ENCODE measurements at regions of chr21 and their contacts with region 1.

Region 1: DNA sequence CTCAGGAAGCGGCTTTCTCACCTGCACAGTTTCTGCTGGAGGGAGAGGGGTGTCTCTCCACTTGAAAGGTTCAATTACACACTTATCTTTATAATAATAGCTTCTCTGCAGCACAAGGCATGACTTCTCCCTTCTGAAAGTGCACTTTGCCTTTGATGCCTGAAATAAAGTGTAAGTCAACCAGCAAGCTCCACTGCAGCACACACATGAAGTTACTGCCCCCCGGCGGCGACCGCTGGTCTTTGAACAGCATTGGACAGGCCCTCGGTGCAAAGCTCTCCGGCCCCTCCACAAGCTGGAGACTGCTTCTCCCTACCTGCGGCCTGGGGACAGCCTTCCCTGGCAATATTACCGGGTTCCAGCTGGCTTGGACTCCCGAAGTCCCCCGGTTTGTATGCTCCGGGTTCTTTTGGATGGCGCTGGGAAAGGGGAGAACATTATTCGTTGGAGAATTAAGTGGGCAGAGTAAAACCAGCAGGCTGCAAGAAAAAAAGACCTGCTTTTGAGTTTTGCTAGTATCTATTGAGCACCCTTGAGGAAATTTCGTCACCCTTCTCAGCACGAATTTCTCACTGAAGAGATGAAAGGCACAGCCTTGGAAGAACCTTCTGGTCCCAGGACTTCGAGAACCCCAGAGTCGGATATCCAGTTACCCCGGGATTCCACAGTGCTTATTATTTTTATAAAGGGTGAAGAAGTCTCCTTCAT is 11.8 kb downstream of the RCAN1 start:
- DNase-seq: peak; percentile 72
- ATAC-seq: peak; percentile 87
- H3K4me3 Mint-ChIP-seq: no peak overlapping the region
- H3K27ac Mint-ChIP-seq: no peak overlapping the region
- H3K4me1 Mint-ChIP-seq: no peaks in the 10 kb centered on the region
- H3K27me3 Mint-ChIP-seq: no peaks in the 10 kb centered on the region

Region 2: GRCh38 chr21:34362136-34362444 is 241.1 kb before region 1 on chr21:
- CTCF ChIA-PET with region 1: interaction called, 16 read pairs
- POLR2A ChIA-PET with region 1: no interaction called
- DNase-seq: no peak
- ATAC-seq: peak; percentile 26
- H3K4me3 Mint-ChIP-seq: no peak overlapping the region
- H3K27ac Mint-ChIP-seq: no peak overlapping the region
- H3K4me1 Mint-ChIP-seq: peaks cover 7% of the 10 kb centered on the region
- H3K27me3 Mint-ChIP-seq: peaks cover 11% of the 10 kb centered on the region

Region 3: GRCh38 chr21:34510148-34511142 is 92.7 kb before region 1 on chr21:
- CTCF ChIA-PET with region 1: interaction called, 25 read pairs
- POLR2A ChIA-PET with region 1: no interaction called
- DNase-seq: peak; percentile 51
- ATAC-seq: peak; percentile 64
- H3K4me3 Mint-ChIP-seq: no peak overlapping the region
- H3K27ac Mint-ChIP-seq: no peak overlapping the region
- H3K4me1 Mint-ChIP-seq: no peaks in the 10 kb centered on the region
- H3K27me3 Mint-ChIP-seq: no peaks in the 10 kb centered on the region

Region 4: GRCh38 chr21:34517491-34518245 is 85.5 kb before region 1 on chr21:
- CTCF ChIA-PET with region 1: interaction called, 25 read pairs
- POLR2A ChIA-PET with region 1: no interaction called
- DNase-seq: peak; percentile 46
- ATAC-seq: peak; percentile 83
- H3K4me3 Mint-ChIP-seq: no peak overlapping the region
- H3K27ac Mint-ChIP-seq: no peak overlapping the region
- H3K4me1 Mint-ChIP-seq: peaks cover 14% of the 10 kb centered on the region
- H3K27me3 Mint-ChIP-seq: no peaks in the 10 kb centered on the region

Region 5: DNA sequence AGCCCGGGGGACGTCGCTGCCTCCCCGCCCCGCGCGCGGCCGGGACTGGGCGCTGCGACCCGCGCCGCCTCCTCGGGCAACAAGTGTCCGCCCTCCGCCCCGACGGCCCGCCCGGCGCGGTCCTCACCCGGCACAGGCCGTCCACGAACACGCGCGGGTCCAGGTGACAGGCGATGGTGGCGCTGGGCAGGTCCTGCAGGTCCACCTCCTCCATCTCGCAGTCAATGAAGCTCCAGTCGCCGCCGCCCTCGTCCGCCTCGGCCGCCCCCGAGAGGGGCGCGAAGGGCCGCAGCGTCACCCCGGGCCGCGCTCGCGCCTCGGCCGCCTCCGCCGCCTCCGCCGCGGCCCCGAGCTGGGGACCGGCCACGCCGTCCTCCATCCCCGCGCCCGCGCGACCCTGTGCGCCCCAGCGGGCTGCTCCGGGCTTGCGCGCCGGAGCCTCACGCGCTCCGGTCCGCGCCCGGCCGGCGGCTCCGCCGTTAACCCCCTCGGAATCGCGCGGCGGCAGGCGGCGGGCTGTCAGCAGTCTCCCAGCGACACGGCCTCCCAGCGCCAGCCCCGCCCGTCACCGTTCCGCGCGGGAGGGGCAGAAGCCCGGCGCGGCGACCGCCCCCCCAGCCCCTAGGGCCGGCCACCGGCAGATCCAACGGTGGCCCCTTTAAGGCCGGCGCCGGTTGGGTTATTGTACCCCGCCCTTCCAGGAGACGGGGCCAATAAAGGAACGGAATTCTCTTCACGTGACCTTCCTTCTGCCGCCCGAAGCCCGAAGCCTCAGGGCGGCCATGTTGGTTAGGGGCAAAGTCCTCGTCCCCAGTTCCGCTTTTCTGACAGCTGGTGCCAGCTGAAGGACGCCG is 11.7 kb after region 1 on chr21 and contains the start of gene RCAN1:
- CTCF ChIA-PET with region 1: interaction called, 25 read pairs
- POLR2A ChIA-PET with region 1: no interaction called
- DNase-seq: peak; percentile 92
- ATAC-seq: peak; percentile 98
- H3K4me3 Mint-ChIP-seq: peak within 1 kb of the TSS; percentile 84
- H3K27ac Mint-ChIP-seq: peak within 1 kb of the TSS; percentile 87
- H3K4me1 Mint-ChIP-seq: peaks cover 22% of the 10 kb centered on the region
- H3K27me3 Mint-ChIP-seq: peaks cover 14% of the 10 kb centered on the region
- total RNA-seq, gene RCAN1: 7.8 to 8.1 TPM

Region 6: GRCh38 chr21:34630536-34631143 is 27.5 kb after region 1 on chr21:
- CTCF ChIA-PET with region 1: interaction called, 11 read pairs
- POLR2A ChIA-PET with region 1: no interaction called
- DNase-seq: peak; percentile 52
- ATAC-seq: peak; percentile 73
- H3K4me3 Mint-ChIP-seq: no peak overlapping the region
- H3K27ac Mint-ChIP-seq: no peak overlapping the region
- H3K4me1 Mint-ChIP-seq: no peaks in the 10 kb centered on the region
- H3K27me3 Mint-ChIP-seq: peaks cover 8% of the 10 kb centered on the region

Region 7: GRCh38 chr21:34771512-34772028 is 168.4 kb after region 1 on chr21:
- CTCF ChIA-PET with region 1: no interaction called
- POLR2A ChIA-PET with region 1: no interaction called
- DNase-seq: no peak
- ATAC-seq: no peak
- H3K4me3 Mint-ChIP-seq: no peak overlapping the region
- H3K27ac Mint-ChIP-seq: no peak overlapping the region
- H3K4me1 Mint-ChIP-seq: no peaks in the 10 kb centered on the region
- H3K27me3 Mint-ChIP-seq: peaks cover 13% of the 10 kb centered on the region

Region 8: GRCh38 chr21:35138665-35139381 is 535.7 kb after region 1 on chr21:
- CTCF ChIA-PET with region 1: no interaction called
- POLR2A ChIA-PET with region 1: no interaction called
- DNase-seq: peak; percentile 71
- ATAC-seq: peak; percentile 81
- H3K4me3 Mint-ChIP-seq: peak overlapping the region; percentile 39
- H3K27ac Mint-ChIP-seq: peak overlapping the region; percentile 53
- H3K4me1 Mint-ChIP-seq: peaks cover 16% of the 10 kb centered on the region
- H3K27me3 Mint-ChIP-seq: no peaks in the 10 kb centered on the region